ENCODE measurements at regions of chr22 and their contacts with region 1.

Region 1: DNA sequence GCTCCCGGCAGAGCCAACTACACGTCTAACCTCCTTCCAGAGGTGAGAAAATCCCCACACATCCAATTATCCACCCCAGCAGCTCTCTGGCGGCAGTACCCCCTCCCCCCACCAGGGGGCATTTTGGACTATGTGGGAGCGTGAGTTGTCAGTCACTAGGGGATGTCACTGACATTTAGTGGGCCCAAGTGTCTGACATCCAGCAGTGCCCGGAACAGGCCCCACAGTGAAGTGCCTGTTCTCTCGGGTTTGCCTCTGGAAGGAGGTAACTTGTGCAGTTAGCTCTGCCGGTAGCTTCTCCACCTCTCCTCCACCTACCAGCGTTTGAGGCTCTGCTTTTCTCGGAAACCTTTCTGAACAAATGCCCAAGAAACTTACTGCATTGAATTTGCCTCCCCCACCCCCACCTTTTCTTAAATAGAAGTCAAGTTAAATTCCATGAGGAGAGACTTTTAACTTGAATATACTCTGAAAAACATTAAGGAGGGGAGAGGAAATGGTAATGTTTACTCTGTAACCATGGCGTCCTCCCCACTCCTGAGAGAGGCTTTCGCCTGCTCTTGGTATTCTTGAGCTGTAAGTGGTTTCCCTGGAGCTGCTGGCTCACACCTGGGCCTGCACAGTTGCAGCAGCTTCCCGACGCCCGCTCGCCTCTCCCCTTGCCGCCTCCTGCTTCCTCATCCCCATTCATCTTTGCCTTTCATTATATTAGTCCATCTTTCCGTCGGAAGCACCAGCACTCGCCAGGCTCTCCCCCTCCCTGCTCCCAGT is 112.8 kb downstream of the WNT7B start:
- DNase-seq: peak in 8 of 10 donors; percentile 67 to 92 (median 74)

Region 2: DNA sequence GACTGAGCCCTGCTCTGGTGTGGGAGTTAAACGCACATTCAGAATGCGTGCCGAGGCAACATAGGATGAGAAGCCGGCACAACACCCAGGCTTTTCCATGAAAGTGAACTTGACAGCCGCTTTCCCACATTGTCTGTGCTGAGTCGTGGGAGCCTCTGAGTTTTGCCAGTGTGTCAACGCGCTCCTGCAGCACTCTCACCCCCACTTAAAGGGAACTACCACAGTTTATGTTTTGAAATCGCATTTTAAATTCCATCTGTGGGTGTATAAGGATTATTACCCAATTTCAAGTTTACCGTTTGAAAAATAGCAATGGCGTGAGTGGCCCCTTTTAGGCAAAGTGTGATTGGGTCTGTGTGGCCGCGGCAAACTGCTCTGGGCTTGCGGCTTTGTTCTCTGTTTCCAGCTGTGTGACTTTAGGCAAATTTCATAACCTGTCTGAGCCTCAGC is 280.0 kb before region 1 on chr22:
- intact Hi-C with region 1: loop called (anchors 10 kb)
- DNase-seq: peak in 4 of 10 donors; percentile 19 to 81 (median 75)

Region 3: DNA sequence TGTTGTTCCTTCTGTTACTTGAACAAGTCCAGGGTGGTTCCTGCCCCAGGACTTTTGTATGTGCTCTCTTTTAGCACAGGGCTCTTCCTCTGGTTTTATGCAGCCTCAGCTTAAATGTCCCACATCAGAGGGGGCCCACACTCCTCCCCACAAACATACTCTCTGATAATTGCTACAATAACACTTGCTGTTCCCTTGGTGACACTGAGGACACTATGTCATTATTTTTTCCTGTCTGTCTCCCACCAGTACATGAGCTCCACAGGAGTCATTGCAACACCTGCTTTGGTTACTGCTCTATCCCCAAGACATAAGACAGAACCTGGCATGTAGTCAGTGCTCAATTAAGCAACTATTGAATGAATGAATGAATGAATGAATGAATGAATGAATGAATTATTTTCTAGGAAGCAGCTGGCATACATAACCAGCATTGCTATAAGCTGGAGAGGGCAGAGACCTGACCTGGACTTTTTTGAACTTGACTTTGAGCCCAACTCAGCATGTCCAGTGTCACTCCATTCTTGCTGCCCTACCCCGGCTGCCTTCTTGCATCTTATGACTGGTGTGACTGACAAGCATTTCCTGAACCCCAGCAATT is 120.2 kb after region 1 on chr22:
- intact Hi-C with region 1: no loop called
- DNase-seq: no peak